Activated T-helper 1 cell treated with anti-CD3 and anti-CD28 coated beads, Interleukin-12 subunit alpha, Interleukin-12 subunit beta, Interleukin-2, Interleukin-4 antibody, amounts not matched to agents 30 ng/mL and 10 ng/mL and 1 ng/mL, durations not matched to agents 14 hours and 24 hours and 36 hours (primary cell): ENCODE measurements at regions of chr3 and their contacts with region 1.

Region 1: GRCh38 chr3:17742108-17742879 is at the start of gene TBC1D5:
- DNase-seq: peak; percentile 90
- H3K4me3 Mint-ChIP-seq: peak within 1 kb of the TSS; percentile 92
- H3K27ac Mint-ChIP-seq: peak within 1 kb of the TSS; percentile 97
- H3K4me1 Mint-ChIP-seq: peaks cover 56% of the 10 kb centered on the region
- H3K27me3 Mint-ChIP-seq: peaks cover 2% of the 10 kb centered on the region
- total RNA-seq, gene TBC1D5: 31.4 and 33.8 TPM in 2 replicates

Region 2: DNA sequence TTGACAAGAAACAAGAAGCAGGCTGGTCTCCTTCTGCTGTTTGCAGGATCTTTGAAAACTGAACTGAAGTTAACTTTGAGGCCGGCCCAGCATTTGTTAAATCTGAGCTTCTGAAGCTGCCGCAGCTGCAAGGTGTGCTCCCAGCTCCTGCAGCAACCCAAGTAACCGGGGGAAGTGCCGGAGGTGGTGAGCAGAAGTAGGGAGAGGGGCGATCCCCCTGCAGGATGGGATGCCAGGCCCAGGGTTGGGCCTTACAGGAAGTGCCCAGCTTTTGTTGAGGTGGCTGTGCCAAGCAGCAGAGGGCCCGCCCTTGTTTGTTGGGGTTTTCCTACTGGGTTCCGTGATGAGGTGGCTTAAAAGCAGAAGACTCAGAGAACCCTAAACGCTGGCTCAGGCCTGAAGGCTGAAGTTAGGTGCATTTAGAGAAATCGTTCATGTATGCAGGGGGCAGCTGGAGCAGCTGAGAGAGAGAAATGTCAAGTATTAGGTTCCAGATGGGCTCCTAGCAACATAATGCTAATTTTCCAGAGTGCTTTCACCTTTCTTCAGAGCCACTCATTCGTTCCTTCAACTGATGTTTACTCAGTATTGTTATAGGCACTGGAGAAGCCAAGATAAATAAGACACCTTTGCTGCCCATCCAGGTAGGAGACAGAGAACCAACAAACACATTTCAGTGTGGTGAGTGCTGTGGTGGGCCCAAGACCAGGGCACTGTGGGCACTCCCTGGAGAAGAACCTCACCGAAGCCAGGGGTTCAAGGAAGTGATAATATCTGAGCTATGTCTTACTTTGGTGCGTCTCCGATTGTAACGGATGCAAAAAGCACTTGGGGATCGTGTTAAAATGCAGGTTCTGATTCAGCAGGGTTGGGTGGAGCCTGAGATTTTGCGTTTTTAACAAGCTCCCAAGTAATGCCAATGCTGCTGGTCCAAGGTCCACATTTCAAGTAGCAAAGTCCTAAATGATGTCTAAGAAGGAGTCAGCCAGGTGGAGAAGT is 899.7 kb before region 1 on chr3:
- intact Hi-C with region 1: loop called (anchors 5 kb)
- DNase-seq: peak; percentile 73
- H3K4me3 Mint-ChIP-seq: peak overlapping the region; percentile 77
- H3K27ac Mint-ChIP-seq: peak overlapping the region; percentile 99
- H3K4me1 Mint-ChIP-seq: peaks cover 71% of the 10 kb centered on the region
- H3K27me3 Mint-ChIP-seq: peaks cover 3% of the 10 kb centered on the region

Region 3: GRCh38 chr3:17179381-17180210 is 562.7 kb before region 1 on chr3:
- intact Hi-C with region 1: loop called (anchors 1 kb)
- DNase-seq: no peak
- H3K4me3 Mint-ChIP-seq: no peak overlapping the region
- H3K27ac Mint-ChIP-seq: no peak overlapping the region
- H3K4me1 Mint-ChIP-seq: peaks cover 44% of the 10 kb centered on the region
- H3K27me3 Mint-ChIP-seq: peaks cover 12% of the 10 kb centered on the region

Region 4: DNA sequence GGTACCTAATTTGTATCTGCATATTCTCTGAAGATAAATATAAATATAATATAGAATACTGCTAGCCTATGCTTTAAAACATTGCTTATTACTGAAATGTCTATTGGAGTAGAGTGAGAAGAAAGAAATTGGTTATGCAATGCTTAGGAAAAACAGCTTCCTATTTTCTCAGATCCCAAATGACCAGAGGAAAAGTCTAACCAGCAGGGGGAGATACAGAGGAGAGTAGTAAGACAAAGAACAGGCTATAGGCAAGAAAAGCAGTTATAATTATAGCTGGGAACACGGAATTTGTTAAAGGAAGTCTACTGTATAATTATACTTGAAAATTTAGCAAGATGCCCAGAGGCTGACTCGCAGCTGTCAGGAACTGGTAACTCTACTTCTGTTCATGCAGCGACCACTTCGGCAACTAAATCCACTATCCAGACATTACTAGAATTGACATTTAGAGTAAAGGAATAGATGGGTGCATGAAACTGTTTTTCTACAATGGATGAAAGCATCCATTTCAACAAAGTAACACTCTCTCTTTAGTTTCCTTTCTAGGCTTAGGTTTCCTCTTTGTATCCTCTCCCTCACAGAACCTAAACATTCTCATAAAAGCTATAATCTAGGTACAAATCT is 97.1 kb before region 1 on chr3:
- intact Hi-C with region 1: loop called (anchors 2 kb)
- DNase-seq: no peak
- H3K4me3 Mint-ChIP-seq: no peak overlapping the region
- H3K27ac Mint-ChIP-seq: no peak overlapping the region
- H3K4me1 Mint-ChIP-seq: no peaks in the 10 kb centered on the region
- H3K27me3 Mint-ChIP-seq: no peaks in the 10 kb centered on the region

Region 5: GRCh38 chr3:17771177-17772017 is 29.1 kb after region 1 on chr3:
- intact Hi-C with region 1: loop called (anchors 1 kb)
- DNase-seq: no peak
- H3K4me3 Mint-ChIP-seq: no peak overlapping the region
- H3K27ac Mint-ChIP-seq: no peak overlapping the region
- H3K4me1 Mint-ChIP-seq: peaks cover 30% of the 10 kb centered on the region
- H3K27me3 Mint-ChIP-seq: peaks cover 2% of the 10 kb centered on the region

Region 6: GRCh38 chr3:17852217-17852616 is 109.9 kb after region 1 on chr3:
- intact Hi-C with region 1: no loop called
- DNase-seq: no peak
- H3K4me3 Mint-ChIP-seq: no peak overlapping the region
- H3K27ac Mint-ChIP-seq: no peak overlapping the region
- H3K4me1 Mint-ChIP-seq: no peaks in the 10 kb centered on the region
- H3K27me3 Mint-ChIP-seq: peaks cover 5% of the 10 kb centered on the region

Region 7: GRCh38 chr3:17927036-17927435 is 184.7 kb after region 1 on chr3:
- intact Hi-C with region 1: no loop called
- DNase-seq: no peak
- H3K4me3 Mint-ChIP-seq: no peak overlapping the region
- H3K27ac Mint-ChIP-seq: no peak overlapping the region
- H3K4me1 Mint-ChIP-seq: no peaks in the 10 kb centered on the region
- H3K27me3 Mint-ChIP-seq: no peaks in the 10 kb centered on the region

Region 8: DNA sequence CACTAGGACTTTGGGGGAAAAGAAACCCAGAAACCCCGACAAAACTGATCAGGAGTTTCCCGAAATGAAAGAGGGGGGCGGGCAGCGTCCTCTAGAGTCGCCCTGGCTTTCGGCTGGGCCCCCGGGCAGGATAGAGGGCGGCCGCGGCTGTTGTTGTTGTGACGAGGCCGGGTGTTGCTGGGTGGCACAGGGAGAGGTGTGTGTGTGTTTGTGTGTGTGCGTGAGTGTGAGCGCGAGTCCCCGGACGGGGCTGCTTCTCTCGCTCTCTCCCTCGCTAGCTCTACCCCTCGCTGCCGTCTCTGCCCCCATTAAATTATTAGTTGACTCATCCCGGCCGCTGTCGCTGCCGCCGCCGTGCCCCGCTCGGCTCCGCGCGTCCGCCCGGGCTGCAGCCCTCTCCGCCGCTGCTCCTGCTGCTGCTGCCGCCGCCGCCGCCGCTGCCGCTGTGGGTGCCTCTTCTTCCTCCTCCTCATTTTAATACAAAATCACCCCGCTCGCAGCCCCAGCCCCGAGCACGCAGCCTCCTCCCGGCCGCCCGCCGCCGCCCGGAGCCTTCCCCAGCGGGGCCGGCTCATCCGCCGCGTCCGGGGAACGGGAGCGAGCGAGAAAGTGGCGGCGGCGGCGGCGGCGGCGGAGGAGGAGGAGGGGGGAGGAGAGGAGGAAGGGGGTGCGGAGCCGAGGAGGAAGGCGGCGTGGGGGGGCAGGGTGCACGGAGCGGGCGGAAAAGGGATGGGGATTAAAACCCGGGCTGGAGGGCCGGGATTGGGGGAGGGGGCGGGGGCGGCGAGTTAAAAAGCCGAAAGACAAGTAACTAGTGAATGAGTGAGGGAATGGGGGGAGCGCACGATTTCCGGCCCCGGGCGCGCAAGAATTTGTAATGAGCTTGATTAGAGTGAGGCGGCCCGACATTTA is 682.7 kb after region 1 on chr3 and contains the start of gene SATB1:
- intact Hi-C with region 1: loop called (anchors 5 kb)
- DNase-seq: peak; percentile 54
- H3K4me3 Mint-ChIP-seq: peak within 1 kb of the TSS; percentile 91
- H3K27ac Mint-ChIP-seq: peak within 1 kb of the TSS; percentile 94
- H3K4me1 Mint-ChIP-seq: peaks cover 72% of the 10 kb centered on the region
- H3K27me3 Mint-ChIP-seq: peaks cover 6% of the 10 kb centered on the region
- total RNA-seq, gene SATB1: 679 and 686 TPM in 2 replicates